ENCODE measurements at regions of chr14 and their contacts with region 1.

Region 1: GRCh38 chr14:92651106-92651757 is 97.2 kb downstream of the LGMN start:
- DNase-seq: peak; percentile 94
- H3K4me3 Mint-ChIP-seq: peak overlapping the region; percentile 94
- H3K27ac Mint-ChIP-seq: peak overlapping the region; percentile 98
- H3K4me1 Mint-ChIP-seq: peaks cover 73% of the 10 kb centered on the region
- H3K27me3 Mint-ChIP-seq: no peaks in the 10 kb centered on the region

Region 2: DNA sequence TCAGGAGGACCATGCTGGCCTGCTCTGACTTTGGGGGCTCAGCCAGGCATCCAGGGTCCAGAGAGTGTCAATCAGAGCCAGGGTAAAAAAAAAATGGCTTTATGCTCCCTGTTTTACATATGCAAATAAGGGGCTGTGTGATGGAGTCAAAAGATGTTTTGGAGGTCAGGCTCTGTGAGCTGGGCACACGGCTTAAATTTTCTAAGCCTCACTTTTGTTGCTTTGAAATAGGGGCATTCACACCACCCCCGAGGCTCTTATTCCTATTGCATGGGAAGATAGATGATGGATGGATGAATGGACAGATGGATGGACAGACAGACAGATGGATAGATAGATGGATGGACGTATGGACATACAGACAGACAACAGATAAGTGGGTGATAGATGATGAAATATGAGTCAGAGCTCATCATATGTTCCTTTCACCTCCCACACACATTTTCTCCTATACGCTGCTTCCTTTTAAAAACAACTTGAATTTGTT is 94.9 kb before region 1 on chr14:
- intact Hi-C with region 1: loop called (anchors 2 kb)
- DNase-seq: no peak
- H3K4me3 Mint-ChIP-seq: peak overlapping the region; percentile 33
- H3K27ac Mint-ChIP-seq: peak overlapping the region; percentile 88
- H3K4me1 Mint-ChIP-seq: peaks cover 62% of the 10 kb centered on the region
- H3K27me3 Mint-ChIP-seq: peaks cover 17% of the 10 kb centered on the region

Region 3: GRCh38 chr14:92615451-92615850 is 35.8 kb before region 1 on chr14:
- intact Hi-C with region 1: loop called (anchors 2 kb)
- DNase-seq: peak; percentile 92
- H3K4me3 Mint-ChIP-seq: peak overlapping the region; percentile 27
- H3K27ac Mint-ChIP-seq: peak overlapping the region; percentile 36
- H3K4me1 Mint-ChIP-seq: peaks cover 31% of the 10 kb centered on the region
- H3K27me3 Mint-ChIP-seq: no peaks in the 10 kb centered on the region

Region 4: GRCh38 chr14:92668276-92668973 is 17.2 kb after region 1 on chr14:
- intact Hi-C with region 1: loop called (anchors 1 kb)
- DNase-seq: no peak
- H3K4me3 Mint-ChIP-seq: no peak overlapping the region
- H3K27ac Mint-ChIP-seq: peak overlapping the region; percentile 81
- H3K4me1 Mint-ChIP-seq: peaks cover 43% of the 10 kb centered on the region
- H3K27me3 Mint-ChIP-seq: no peaks in the 10 kb centered on the region

Region 5: GRCh38 chr14:92768795-92769194 is 117.6 kb after region 1 on chr14:
- intact Hi-C with region 1: no loop called
- DNase-seq: no peak
- H3K4me3 Mint-ChIP-seq: no peak overlapping the region
- H3K27ac Mint-ChIP-seq: peak overlapping the region; percentile 14
- H3K4me1 Mint-ChIP-seq: peaks cover 18% of the 10 kb centered on the region
- H3K27me3 Mint-ChIP-seq: peaks cover 31% of the 10 kb centered on the region

Region 6: GRCh38 chr14:93146119-93146518 is 494.9 kb after region 1 on chr14:
- intact Hi-C with region 1: no loop called
- DNase-seq: no peak
- H3K4me3 Mint-ChIP-seq: no peak overlapping the region
- H3K27ac Mint-ChIP-seq: no peak overlapping the region
- H3K4me1 Mint-ChIP-seq: no peaks in the 10 kb centered on the region
- H3K27me3 Mint-ChIP-seq: no peaks in the 10 kb centered on the region